Activated CD4-positive, alpha-beta memory T cell treated with anti-CD3 and anti-CD28 coated beads for 36 hours (primary cell): ENCODE measurements at regions of chr3 and their contacts with region 1.

Region 1: GRCh38 chr3:12193485-12194165 is 34.9 kb upstream of the TIMP4 start:
- DNase-seq: peak; percentile 66
- H3K4me3 Mint-ChIP-seq: no peak overlapping the region
- H3K27ac Mint-ChIP-seq: peak overlapping the region; percentile 84
- H3K4me1 Mint-ChIP-seq: peaks cover 54% of the 10 kb centered on the region
- H3K27me3 Mint-ChIP-seq: peaks cover 7% of the 10 kb centered on the region

Region 2: GRCh38 chr3:11643605-11644087 is 550.0 kb before region 1 on chr3 and contains the start of gene VGLL4:
- CTCF ChIA-PET with region 1: no interaction called
- POLR2A ChIA-PET with region 1: no interaction called
- intact Hi-C with region 1: loop called (anchors 2 kb)
- DNase-seq: peak; percentile 81
- H3K4me3 Mint-ChIP-seq: peak within 1 kb of the TSS; percentile 96
- H3K27ac Mint-ChIP-seq: peak within 1 kb of the TSS; percentile 97
- H3K4me1 Mint-ChIP-seq: peaks cover 27% of the 10 kb centered on the region
- H3K27me3 Mint-ChIP-seq: no peaks in the 10 kb centered on the region
- total RNA-seq, gene VGLL4: 18.2 to 18.7 TPM

Region 3: GRCh38 chr3:12175844-12176453 is 17.7 kb before region 1 on chr3:
- CTCF ChIA-PET with region 1: interaction called, 67 read pairs
- POLR2A ChIA-PET with region 1: interaction called, 17 read pairs
- intact Hi-C with region 1: loop called (anchors 1 kb)
- DNase-seq: peak; percentile 62
- H3K4me3 Mint-ChIP-seq: no peak overlapping the region
- H3K27ac Mint-ChIP-seq: no peak overlapping the region
- H3K4me1 Mint-ChIP-seq: peaks cover 18% of the 10 kb centered on the region
- H3K27me3 Mint-ChIP-seq: no peaks in the 10 kb centered on the region

Region 4: DNA sequence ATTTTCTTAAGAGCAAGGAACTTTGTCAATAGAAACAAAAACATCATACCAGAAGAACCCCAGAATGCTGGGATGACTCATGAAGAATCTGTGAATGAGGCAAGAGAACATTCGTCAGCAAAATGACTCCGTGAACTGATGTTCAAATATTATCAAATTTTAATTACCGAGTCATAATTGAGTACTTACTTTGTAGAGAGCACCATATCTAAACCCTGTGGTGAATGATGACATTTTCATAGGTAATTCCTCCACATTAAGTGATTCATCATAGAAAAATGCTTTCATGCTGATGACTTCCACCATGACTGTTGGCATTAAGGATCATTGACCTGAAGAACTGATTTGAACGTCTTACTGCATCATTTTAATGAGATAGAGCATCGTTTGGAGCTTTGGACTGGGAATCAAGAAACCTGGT is 151.5 kb after region 1 on chr3:
- CTCF ChIA-PET with region 1: no interaction called
- POLR2A ChIA-PET with region 1: no interaction called
- intact Hi-C with region 1: loop called (anchors 2 kb)
- DNase-seq: no peak
- H3K4me3 Mint-ChIP-seq: peak overlapping the region; percentile 4
- H3K27ac Mint-ChIP-seq: peak overlapping the region; percentile 31
- H3K4me1 Mint-ChIP-seq: peaks cover 9% of the 10 kb centered on the region
- H3K27me3 Mint-ChIP-seq: peaks cover 14% of the 10 kb centered on the region

Region 5: DNA sequence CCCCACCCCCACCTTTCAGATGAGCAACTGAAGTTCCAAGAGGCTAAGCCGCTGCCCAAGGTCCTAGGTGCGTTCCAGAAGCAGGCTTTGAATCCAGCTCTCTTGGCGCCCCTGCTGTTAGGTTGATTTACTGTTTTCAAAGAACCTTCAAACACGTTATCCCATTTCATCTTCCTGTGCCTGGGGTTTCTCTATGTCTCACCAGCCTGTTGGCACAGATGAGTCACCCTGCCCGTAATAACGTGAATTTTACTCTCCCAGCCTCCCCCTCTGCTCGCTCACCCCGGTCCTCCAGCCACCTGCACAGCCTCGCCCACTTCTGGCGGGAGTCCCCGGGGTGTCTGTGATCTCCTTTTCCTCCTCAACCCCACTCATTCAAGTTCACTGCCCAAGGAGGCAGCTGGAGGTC is 277.6 kb after region 1 on chr3:
- CTCF ChIA-PET with region 1: interaction called, 7 read pairs
- POLR2A ChIA-PET with region 1: interaction called, 4 read pairs
- intact Hi-C with region 1: loop called (anchors 1 kb)
- DNase-seq: peak; percentile 91
- H3K4me3 Mint-ChIP-seq: peak overlapping the region; percentile 8
- H3K27ac Mint-ChIP-seq: peak overlapping the region; percentile 64
- H3K4me1 Mint-ChIP-seq: peaks cover 37% of the 10 kb centered on the region
- H3K27me3 Mint-ChIP-seq: peaks cover 1% of the 10 kb centered on the region

Region 6: DNA sequence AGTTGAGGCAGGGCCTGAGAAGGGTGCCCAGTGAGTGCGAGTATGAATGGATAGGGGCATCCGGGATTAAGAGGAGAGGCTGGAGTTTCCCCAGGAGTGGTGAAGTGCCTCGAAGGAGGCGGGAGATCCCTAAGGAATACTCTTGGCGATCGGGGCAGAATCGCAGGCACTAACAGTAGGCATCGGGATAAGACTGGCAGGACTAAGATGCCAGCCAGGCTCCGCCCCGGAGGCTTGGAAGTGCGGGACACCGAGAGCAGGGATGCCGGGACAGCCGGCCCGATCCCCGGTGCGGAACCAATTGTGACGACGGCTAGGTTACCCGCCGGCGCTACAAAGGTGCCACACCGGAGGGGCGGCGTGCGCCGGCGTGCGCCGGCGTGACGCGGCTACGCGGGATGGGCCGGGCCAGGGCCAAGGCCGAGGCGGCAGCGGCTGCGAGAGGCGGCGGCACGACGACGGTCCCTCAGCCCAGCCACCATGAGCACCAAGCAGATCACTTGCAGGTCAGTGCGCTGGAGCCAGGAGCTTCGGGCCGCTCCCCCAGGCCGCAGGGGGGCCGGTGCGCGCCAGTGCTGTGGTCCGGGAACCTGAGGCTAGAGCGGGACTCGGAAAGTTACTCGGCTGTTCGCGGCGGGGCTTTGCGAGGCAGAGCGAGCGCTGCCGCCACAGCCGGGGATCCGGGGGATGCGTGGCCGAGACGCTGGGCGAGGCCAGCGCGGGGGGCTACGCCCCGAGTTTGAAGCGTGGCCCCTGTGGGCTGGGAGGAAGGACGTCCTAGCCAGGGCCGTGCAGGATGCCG is 363.2 kb after region 1 on chr3 and contains the start of gene MKRN2:
- CTCF ChIA-PET with region 1: no interaction called
- POLR2A ChIA-PET with region 1: no interaction called
- intact Hi-C with region 1: loop called (anchors 5 kb)
- DNase-seq: peak; percentile 89
- H3K4me3 Mint-ChIP-seq: peak within 1 kb of the TSS; percentile 78
- H3K27ac Mint-ChIP-seq: peak within 1 kb of the TSS; percentile 91
- H3K4me1 Mint-ChIP-seq: peaks cover 57% of the 10 kb centered on the region
- H3K27me3 Mint-ChIP-seq: peaks cover 26% of the 10 kb centered on the region
- total RNA-seq, gene MKRN2: 28.5 to 30.1 TPM